Heart left ventricle (tissue), 16 donors: ENCODE measurements at regions of chr3 and their contacts with region 1.

Region 1: DNA sequence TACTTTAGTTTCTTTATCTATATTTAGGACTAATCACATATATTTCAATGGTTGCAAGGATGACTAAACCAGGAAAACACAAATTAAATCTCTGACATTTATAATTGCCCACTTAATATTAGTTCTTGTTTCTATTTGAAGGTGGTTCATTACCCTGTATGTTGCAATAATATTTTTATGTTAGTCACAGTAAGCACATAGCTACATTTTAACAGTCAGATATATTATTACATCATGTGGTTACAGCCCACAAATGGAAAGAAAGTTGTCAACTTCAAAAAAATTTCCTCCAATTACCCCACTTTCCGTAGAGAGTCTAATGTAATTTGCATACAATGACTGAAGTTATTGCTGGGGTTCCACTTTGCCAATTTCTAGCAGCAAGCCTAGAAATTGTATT is 114.6 kb downstream of the TUSC7 start:
- DNase-seq: no peak
- ATAC-seq: no peak
- H3K4me3 ChIP-seq: no peak overlapping the region
- H3K27ac ChIP-seq: no peak overlapping the region
- H3K4me1 ChIP-seq: no peaks in the 10 kb centered on the region
- H3K27me3 ChIP-seq: no peaks in the 10 kb centered on the region
- CTCF ChIP-seq: no peak
- POLR2A ChIP-seq: no peak

Region 2: GRCh38 chr3:116849261-116849688 is 25.1 kb after region 1 on chr3:
- intact Hi-C with region 1: loop called in 1 of 10 experiments (anchors 1 kb)
- DNase-seq: no peak
- ATAC-seq: no peak
- H3K4me3 ChIP-seq: no peak overlapping the region
- H3K27ac ChIP-seq: no peak overlapping the region
- H3K4me1 ChIP-seq: no peaks in the 10 kb centered on the region
- H3K27me3 ChIP-seq: no peaks in the 10 kb centered on the region
- CTCF ChIP-seq: no peak
- POLR2A ChIP-seq: no peak